Left lung (tissue), 14 donors: ENCODE measurements at regions of chr16 and their contacts with region 1.

Region 1: GRCh38 chr16:1194665-1195392 is 30.2 kb downstream of the TPSG1 start:
- DNase-seq: no peak
- ATAC-seq: peak; percentile 45
- H3K4me3 ChIP-seq: no peak overlapping the region
- H3K27ac ChIP-seq: no peak overlapping the region
- H3K4me1 ChIP-seq: no peaks in the 10 kb centered on the region
- H3K27me3 ChIP-seq: peaks cover 0 to 51% of the 10 kb centered on the region in 2 donors
- CTCF ChIP-seq: peak; percentile 59 to 72

Region 2: GRCh38 chr16:1105888-1106620 is 88.8 kb before region 1 on chr16:
- intact Hi-C with region 1: loop called in 1 of 2 experiments (anchors 2 kb)
- DNase-seq: peak in 2 of 4 donors; percentile 46 to 75
- ATAC-seq: peak; percentile 78
- H3K4me3 ChIP-seq: no peak overlapping the region
- H3K27ac ChIP-seq: no peak overlapping the region
- H3K4me1 ChIP-seq: peaks cover 0 to 3% of the 10 kb centered on the region in 2 donors
- H3K27me3 ChIP-seq: peaks cover 8 to 97% of the 10 kb centered on the region in 2 donors
- CTCF ChIP-seq: peak; percentile 55 to 71

Region 3: DNA sequence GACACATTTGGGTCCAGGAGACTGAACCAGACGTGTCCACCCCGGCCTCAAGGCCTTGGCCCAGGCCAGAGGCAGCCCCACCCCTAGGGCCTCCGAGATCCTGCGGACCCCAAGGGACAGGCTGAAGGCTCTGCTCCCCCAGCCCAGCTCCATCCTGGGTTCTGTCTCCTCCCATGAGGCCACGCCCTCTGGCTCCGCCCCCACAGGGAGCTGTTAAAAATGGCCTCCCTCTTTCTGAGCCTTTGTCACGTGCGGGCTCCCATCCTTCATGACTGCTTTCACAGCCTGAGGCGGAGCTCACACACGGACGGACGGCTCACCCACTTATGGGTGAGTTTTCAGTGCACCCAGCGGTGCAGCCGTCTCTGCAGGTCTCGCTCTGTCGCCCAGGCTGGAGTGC is 48.4 kb before region 1 on chr16:
- intact Hi-C with region 1: no loop called
- DNase-seq: no peak
- ATAC-seq: no peak
- H3K4me3 ChIP-seq: no peak overlapping the region
- H3K27ac ChIP-seq: no peak overlapping the region
- H3K4me1 ChIP-seq: no peaks in the 10 kb centered on the region
- H3K27me3 ChIP-seq: peaks cover 0 to 92% of the 10 kb centered on the region in 2 donors
- CTCF ChIP-seq: no peak